Mammary epithelial cell (primary cell): ENCODE measurements at regions of chr2 and their contacts with region 1.

Region 1: DNA sequence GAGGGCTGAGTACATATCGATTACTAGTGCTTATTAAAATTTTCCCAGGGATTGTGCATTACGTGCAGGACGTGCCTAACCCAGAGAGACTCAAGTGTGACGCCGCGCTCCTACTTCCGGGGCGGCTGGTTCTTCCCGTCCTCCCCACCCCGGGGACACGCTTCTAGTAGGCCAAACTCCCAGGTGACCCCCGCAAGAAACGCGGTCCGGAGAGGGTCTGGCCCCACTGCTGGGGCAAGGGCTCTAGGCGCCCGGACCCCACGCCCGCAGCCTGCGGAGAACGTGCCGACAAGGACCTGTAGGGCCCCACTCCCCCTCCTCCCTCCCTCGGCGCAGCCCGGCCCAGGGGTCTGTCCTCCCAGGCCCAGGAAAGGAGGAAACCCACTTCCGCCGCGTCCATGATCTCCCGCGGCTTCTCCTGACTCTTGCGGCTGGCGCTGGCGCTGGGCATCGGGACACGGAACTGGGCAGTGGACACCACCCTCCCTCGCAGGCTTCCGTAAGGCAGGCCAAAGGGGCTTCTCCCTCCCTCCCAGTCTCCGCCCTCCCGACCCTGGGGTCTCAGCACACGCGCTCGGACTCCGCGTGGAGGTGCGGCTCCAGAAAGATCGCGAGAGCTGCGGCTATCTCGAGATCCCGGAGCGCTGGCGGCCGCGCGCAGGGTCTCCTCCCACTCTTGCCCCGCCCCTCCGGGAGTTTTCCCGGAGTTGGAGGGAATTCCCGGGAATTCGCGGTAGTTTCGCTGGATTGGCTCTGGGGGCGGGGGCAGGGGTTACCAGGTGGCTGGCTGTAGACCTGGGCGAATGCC is at the start of gene DARS1:
- DNase-seq: peak; percentile 94
- H3K4me3 ChIP-seq: peak within 1 kb of the TSS; percentile 86 to 95 (median 87)
- H3K27ac ChIP-seq: peak within 1 kb of the TSS; percentile 99
- H3K4me1 ChIP-seq: peaks cover 3% of the 10 kb centered on the region
- H3K27me3 ChIP-seq: no peaks in the 10 kb centered on the region
- CTCF ChIP-seq: no peak
- total RNA-seq, gene DARS1: 64.3 to 68.8 TPM

Region 2: GRCh38 chr2:135202756-135203155 is 782.5 kb before region 1 on chr2:
- CTCF ChIA-PET with region 1: no interaction called
- dilution Hi-C with region 1: no loop called
- in situ Hi-C with region 1: no loop called
- intact Hi-C with region 1: no loop called
- DNase-seq: no peak
- H3K4me3 ChIP-seq: no peak overlapping the region
- H3K27ac ChIP-seq: no peak overlapping the region
- H3K4me1 ChIP-seq: no peaks in the 10 kb centered on the region
- H3K27me3 ChIP-seq: no peaks in the 10 kb centered on the region
- CTCF ChIP-seq: no peak

Region 3: GRCh38 chr2:135948642-135949355 is 36.4 kb before region 1 on chr2:
- CTCF ChIA-PET with region 1: no interaction called
- dilution Hi-C with region 1: no loop called
- in situ Hi-C with region 1: no loop called
- intact Hi-C with region 1: loop called (anchors 5 kb)
- DNase-seq: peak; percentile 90
- H3K4me3 ChIP-seq: peak overlapping the region; percentile 8 to 41 (median 31)
- H3K27ac ChIP-seq: peak overlapping the region; percentile 99
- H3K4me1 ChIP-seq: peaks cover 10% of the 10 kb centered on the region
- H3K27me3 ChIP-seq: no peaks in the 10 kb centered on the region
- CTCF ChIP-seq: no peak

Region 4: DNA sequence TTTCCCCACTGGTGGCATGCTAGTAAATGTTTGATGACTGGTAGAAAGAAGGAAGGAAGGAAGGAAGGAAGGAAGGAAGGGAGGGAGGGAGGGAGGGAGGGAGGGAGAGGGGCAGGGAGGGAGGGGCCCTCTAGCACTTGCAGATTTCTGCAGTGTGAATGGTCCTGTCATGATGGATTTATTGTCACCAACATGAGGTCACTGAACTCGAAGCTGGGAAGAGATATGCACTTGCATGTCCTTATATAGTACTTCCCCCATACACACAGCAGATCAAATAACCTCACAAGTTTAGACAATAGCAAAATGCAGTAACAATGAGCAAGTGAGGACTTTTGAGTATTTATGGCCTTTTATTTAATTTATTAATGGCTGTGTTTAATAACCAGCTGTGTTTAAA is 177.2 kb after region 1 on chr2:
- CTCF ChIA-PET with region 1: no interaction called
- dilution Hi-C with region 1: no loop called
- in situ Hi-C with region 1: no loop called
- intact Hi-C with region 1: no loop called
- DNase-seq: no peak
- H3K4me3 ChIP-seq: no peak overlapping the region
- H3K27ac ChIP-seq: no peak overlapping the region
- H3K4me1 ChIP-seq: no peaks in the 10 kb centered on the region
- H3K27me3 ChIP-seq: no peaks in the 10 kb centered on the region
- CTCF ChIP-seq: no peak

Region 5: GRCh38 chr2:136874258-136874657 is 889.0 kb after region 1 on chr2:
- CTCF ChIA-PET with region 1: no interaction called
- dilution Hi-C with region 1: no loop called
- in situ Hi-C with region 1: no loop called
- intact Hi-C with region 1: no loop called
- DNase-seq: no peak
- H3K4me3 ChIP-seq: no peak overlapping the region
- H3K27ac ChIP-seq: no peak overlapping the region
- H3K4me1 ChIP-seq: no peaks in the 10 kb centered on the region
- H3K27me3 ChIP-seq: no peaks in the 10 kb centered on the region
- CTCF ChIP-seq: peak; percentile 35 to 54